Mammary epithelial cell (primary cell): ENCODE measurements at regions of chr5 and their contacts with region 1.

Region 1: GRCh38 chr5:42767491-42768105 is 11.0 kb downstream of the CCDC152 start:
- DNase-seq: peak; percentile 17
- H3K4me3 ChIP-seq: no peak overlapping the region
- H3K27ac ChIP-seq: no peak overlapping the region
- H3K4me1 ChIP-seq: no peaks in the 10 kb centered on the region
- H3K27me3 ChIP-seq: no peaks in the 10 kb centered on the region
- CTCF ChIP-seq: peak; percentile 28 to 48

Region 2: GRCh38 chr5:41707853-41708603 is 1059.6 kb before region 1 on chr5:
- CTCF ChIA-PET with region 1: no interaction called
- dilution Hi-C with region 1: no loop called
- in situ Hi-C with region 1: no loop called
- intact Hi-C with region 1: loop called (anchors 10 kb)
- DNase-seq: peak; percentile 37
- H3K4me3 ChIP-seq: no peak overlapping the region
- H3K27ac ChIP-seq: no peak overlapping the region
- H3K4me1 ChIP-seq: no peaks in the 10 kb centered on the region
- H3K27me3 ChIP-seq: no peaks in the 10 kb centered on the region
- CTCF ChIP-seq: peak; percentile 57 to 69

Region 3: DNA sequence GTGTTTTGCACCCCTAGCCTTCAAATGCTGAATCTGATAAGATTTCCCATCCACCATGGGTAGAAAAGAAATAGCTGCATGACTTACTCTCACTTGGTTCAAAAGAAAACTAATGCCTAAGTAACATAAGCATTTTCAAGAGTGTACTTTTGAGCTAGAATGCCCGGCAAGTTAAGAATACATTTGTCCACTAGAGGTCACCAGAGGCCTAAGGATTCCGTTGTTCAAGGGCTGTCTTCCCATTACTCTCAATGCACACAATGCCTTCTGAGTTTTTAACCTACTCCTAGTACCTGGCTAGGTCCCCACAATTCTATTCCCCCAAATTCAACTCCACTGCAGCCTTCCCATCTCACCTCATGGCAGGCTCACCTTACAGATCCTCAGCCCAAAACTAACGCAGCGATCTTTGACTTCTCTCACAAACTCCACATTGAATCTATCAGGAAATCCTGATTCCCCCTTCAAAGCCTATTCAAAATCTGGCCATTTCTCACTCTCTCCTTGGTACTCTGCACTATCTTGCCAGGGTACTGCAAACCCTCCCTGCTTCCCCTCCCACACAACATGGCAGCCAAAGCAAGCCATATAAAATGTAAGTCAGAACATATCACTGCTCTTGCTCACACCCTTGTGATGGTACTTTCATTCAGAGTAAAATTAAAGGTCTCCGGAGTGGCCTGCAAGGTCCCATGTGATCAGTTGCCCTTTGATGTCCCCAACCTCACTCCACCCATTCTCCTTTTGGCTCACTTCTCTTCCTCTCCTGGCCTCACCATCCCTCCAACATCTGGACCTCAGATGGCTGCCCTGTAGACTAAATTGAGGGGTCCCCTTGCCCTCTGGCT is 910.7 kb before region 1 on chr5:
- CTCF ChIA-PET with region 1: no interaction called
- dilution Hi-C with region 1: no loop called
- in situ Hi-C with region 1: no loop called
- intact Hi-C with region 1: loop called (anchors 1 kb)
- DNase-seq: peak; percentile 47
- H3K4me3 ChIP-seq: no peak overlapping the region
- H3K27ac ChIP-seq: no peak overlapping the region
- H3K4me1 ChIP-seq: no peaks in the 10 kb centered on the region
- H3K27me3 ChIP-seq: no peaks in the 10 kb centered on the region
- CTCF ChIP-seq: peak; percentile 74 to 78

Region 4: GRCh38 chr5:42005561-42006153 is 761.9 kb before region 1 on chr5:
- CTCF ChIA-PET with region 1: interaction called, 5 read pairs
- dilution Hi-C with region 1: no loop called
- in situ Hi-C with region 1: no loop called
- intact Hi-C with region 1: loop called (anchors 5 kb)
- DNase-seq: peak; percentile 8
- H3K4me3 ChIP-seq: no peak overlapping the region
- H3K27ac ChIP-seq: no peak overlapping the region
- H3K4me1 ChIP-seq: no peaks in the 10 kb centered on the region
- H3K27me3 ChIP-seq: no peaks in the 10 kb centered on the region
- CTCF ChIP-seq: peak; percentile 70 to 75

Region 5: DNA sequence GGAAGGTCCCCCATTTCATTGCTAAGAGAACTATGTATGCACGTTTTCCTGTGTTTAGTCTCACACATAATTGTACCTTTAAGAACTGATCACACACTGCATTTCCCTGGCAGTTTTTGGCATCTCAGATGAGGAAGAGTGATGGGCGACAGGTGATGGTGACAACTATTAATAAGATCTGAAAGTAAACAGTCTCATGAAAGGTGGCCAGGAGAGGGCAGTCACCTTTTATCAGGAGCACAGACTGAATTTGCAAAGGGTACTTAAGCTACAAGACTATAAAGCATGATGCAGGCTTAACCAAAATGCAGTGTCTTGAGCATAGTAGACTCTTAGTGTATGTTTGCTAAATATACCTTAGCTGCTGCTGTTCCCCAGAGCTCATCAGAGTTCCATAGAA is 252.8 kb before region 1 on chr5:
- CTCF ChIA-PET with region 1: interaction called, 4 read pairs
- dilution Hi-C with region 1: no loop called
- in situ Hi-C with region 1: no loop called
- intact Hi-C with region 1: loop called (anchors 5 kb)
- DNase-seq: peak; percentile 7
- H3K4me3 ChIP-seq: no peak overlapping the region
- H3K27ac ChIP-seq: no peak overlapping the region
- H3K4me1 ChIP-seq: no peaks in the 10 kb centered on the region
- H3K27me3 ChIP-seq: no peaks in the 10 kb centered on the region
- CTCF ChIP-seq: peak; percentile 30 to 56

Region 6: GRCh38 chr5:42798284-42799240 is 31.0 kb after region 1 on chr5:
- CTCF ChIA-PET with region 1: no interaction called
- dilution Hi-C with region 1: no loop called
- in situ Hi-C with region 1: no loop called
- intact Hi-C with region 1: no loop called
- DNase-seq: no peak
- H3K4me3 ChIP-seq: no peak overlapping the region
- H3K27ac ChIP-seq: no peak overlapping the region
- H3K4me1 ChIP-seq: no peaks in the 10 kb centered on the region
- H3K27me3 ChIP-seq: no peaks in the 10 kb centered on the region
- CTCF ChIP-seq: no peak